ENCODE measurements at regions of chr1 and their contacts with region 1.

Region 1: GRCh38 chr1:157138220-157139051 is at the start of gene ETV3:
- DNase-seq: peak; percentile 83
- ATAC-seq: peak; percentile 94
- H3K4me3 ChIP-seq: peak within 1 kb of the TSS; percentile 91 to 99 (median 97)
- H3K27ac ChIP-seq: peak within 1 kb of the TSS; percentile 84
- H3K4me1 ChIP-seq: peaks cover 33% of the 10 kb centered on the region
- H3K27me3 ChIP-seq: no peaks in the 10 kb centered on the region; a peak in 1 of 5 replicates
- CTCF ChIP-seq: no peak
- EP300 ChIP-seq: 0 out of 4 replicates have a peak, but pooled peaks of 1 of the 2 experiments have one; percentile 19
- POLR2A ChIP-seq: peak; percentile 54 to 86
- RAD21 ChIP-seq: no peak
- total RNA-seq, gene ETV3: 5.8 and 8.5 TPM in 2 replicates

Region 2: DNA sequence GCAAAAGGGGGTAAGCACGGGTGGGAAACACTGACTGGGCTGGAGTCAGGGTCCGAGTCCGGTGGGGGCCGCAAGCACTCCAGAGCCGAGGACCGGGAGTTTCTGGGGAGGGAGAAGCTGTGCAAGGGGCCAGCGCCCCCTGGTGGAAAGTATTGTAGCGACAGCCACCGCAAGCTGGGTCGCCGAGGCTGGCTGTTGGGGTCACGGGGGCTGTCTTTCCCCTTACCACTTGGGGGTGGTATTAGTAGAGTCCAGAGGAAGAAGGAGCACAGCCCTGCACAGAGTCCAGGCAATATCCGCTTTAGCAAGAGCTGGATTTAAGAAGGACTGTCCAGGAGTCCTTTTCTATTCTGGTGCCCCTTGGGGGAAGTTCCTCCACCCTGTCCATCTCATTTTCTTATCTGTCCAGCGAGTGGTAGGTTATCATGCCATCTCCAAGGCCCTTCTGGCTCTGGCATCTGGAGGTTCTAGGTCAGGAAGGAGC is 17.7 kb after region 1 on chr1:
- CTCF ChIA-PET with region 1: no interaction called
- POLR2A ChIA-PET with region 1: interaction called, 7 read pairs
- in situ Hi-C with region 1: no loop called
- intact Hi-C with region 1: loop called (anchors 1 kb)
- DNase-seq: peak; percentile 57
- ATAC-seq: peak; percentile 80
- H3K4me3 ChIP-seq: peak overlapping the region; percentile 21 to 62 (median 56); a peak in 4 of 6 replicates
- H3K27ac ChIP-seq: no peak overlapping the region
- H3K4me1 ChIP-seq: peaks cover 31% of the 10 kb centered on the region
- H3K27me3 ChIP-seq: peaks cover 3 to 21% of the 10 kb centered on the region in 2 experiments; a peak in 4 of 5 replicates
- CTCF ChIP-seq: peak; percentile 93
- EP300 ChIP-seq: no peak
- POLR2A ChIP-seq: no peak
- RAD21 ChIP-seq: peak; percentile 83

Region 3: DNA sequence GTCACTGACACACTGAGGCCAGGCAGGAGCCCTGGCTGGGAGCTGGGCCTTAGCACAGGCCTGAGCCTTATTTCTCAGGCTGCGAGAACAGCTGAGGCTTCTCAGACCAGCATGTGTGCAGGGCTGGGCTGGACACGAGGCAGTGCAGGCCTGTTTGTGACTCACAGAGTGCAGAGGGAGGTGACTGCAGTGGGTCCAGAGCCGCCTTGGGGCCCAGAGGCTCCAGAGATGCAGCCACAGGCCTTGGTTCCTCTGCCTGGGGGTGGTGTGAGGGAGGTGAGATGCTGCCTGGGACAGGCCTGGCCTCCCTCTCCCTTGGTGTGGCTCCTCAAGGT is 61.0 kb after region 1 on chr1:
- CTCF ChIA-PET with region 1: no interaction called
- POLR2A ChIA-PET with region 1: no interaction called
- in situ Hi-C with region 1: no loop called
- intact Hi-C with region 1: no loop called
- DNase-seq: no peak
- ATAC-seq: peak; percentile 21; the same call in 1 of the 3 replicates
- H3K4me3 ChIP-seq: no peak overlapping the region
- H3K27ac ChIP-seq: no peak overlapping the region
- H3K4me1 ChIP-seq: peaks cover 52% of the 10 kb centered on the region
- H3K27me3 ChIP-seq: no peaks in the 10 kb centered on the region; a peak in 1 of 5 replicates
- CTCF ChIP-seq: no peak
- EP300 ChIP-seq: no peak
- POLR2A ChIP-seq: no peak
- RAD21 ChIP-seq: no peak